Naive thymus-derived CD4-positive, alpha-beta T cell (primary cell): ENCODE measurements at regions of chr11 and their contacts with region 1.

Region 1: GRCh38 chr11:304915-305843 is 2.4 kb upstream of the IFITM2 start:
- DNase-seq: peak in 6 of 9 donors; percentile 62 to 76 (median 70)
- ATAC-seq: peak; percentile 44
- H3K4me3 ChIP-seq: no peak overlapping the region
- H3K4me3 Mint-ChIP-seq: peak overlapping the region in 7 of 10 donors; percentile 0 to 55 (median 47)
- H3K27ac ChIP-seq: peak overlapping the region; percentile 95
- H3K27ac Mint-ChIP-seq: peak overlapping the region; percentile 14 to 97 (median 84)
- H3K4me1 ChIP-seq: peaks cover 21 to 24% of the 10 kb centered on the region in 2 donors
- H3K4me1 Mint-ChIP-seq: peaks cover 29 to 61% (median 48%) of the 10 kb centered on the region in 7 donors
- H3K27me3 ChIP-seq: no peaks in the 10 kb centered on the region
- H3K27me3 Mint-ChIP-seq: peaks cover 0 to 9% (median 0%) of the 10 kb centered on the region in 5 donors

Region 2: DNA sequence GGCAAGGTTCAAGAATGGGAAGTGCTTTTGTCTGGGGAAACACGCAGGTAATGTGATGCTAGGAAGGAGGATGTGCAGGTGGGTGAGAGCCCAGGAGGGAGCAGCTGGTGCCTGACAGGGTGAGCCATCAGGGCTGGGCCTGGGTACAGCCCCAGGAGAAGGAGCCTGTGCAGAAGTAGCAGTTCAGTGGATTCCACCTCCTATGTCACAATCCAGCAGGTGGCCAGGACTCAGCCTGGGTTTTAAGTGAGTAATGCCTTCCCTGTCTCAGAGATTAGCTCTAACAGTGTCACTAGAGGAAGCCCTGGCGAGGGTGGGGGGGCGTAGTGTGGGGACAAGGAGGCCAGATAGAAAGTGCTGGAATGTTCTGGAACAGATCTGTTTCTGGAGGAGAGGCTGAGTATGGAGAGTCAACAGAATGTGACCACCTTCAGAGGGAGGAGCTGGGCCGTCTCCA is 89.6 kb before region 1 on chr11:
- CTCF ChIA-PET with region 1: no interaction called
- POLR2A ChIA-PET with region 1: no interaction called
- intact Hi-C with region 1: no loop called
- DNase-seq: peak in 1 of 9 donors; percentile 4
- ATAC-seq: no peak
- H3K4me3 ChIP-seq: no peak overlapping the region
- H3K4me3 Mint-ChIP-seq: no peak overlapping the region
- H3K27ac ChIP-seq: no peak overlapping the region
- H3K27ac Mint-ChIP-seq: peak overlapping the region in 5 of 9 donors; percentile 10 to 79 (median 60)
- H3K4me1 ChIP-seq: peaks cover 0 to 3% of the 10 kb centered on the region in 2 donors
- H3K4me1 Mint-ChIP-seq: peaks cover 0 to 25% (median 6%) of the 10 kb centered on the region in 7 donors
- H3K27me3 ChIP-seq: no peaks in the 10 kb centered on the region
- H3K27me3 Mint-ChIP-seq: no peaks in the 10 kb centered on the region

Region 3: DNA sequence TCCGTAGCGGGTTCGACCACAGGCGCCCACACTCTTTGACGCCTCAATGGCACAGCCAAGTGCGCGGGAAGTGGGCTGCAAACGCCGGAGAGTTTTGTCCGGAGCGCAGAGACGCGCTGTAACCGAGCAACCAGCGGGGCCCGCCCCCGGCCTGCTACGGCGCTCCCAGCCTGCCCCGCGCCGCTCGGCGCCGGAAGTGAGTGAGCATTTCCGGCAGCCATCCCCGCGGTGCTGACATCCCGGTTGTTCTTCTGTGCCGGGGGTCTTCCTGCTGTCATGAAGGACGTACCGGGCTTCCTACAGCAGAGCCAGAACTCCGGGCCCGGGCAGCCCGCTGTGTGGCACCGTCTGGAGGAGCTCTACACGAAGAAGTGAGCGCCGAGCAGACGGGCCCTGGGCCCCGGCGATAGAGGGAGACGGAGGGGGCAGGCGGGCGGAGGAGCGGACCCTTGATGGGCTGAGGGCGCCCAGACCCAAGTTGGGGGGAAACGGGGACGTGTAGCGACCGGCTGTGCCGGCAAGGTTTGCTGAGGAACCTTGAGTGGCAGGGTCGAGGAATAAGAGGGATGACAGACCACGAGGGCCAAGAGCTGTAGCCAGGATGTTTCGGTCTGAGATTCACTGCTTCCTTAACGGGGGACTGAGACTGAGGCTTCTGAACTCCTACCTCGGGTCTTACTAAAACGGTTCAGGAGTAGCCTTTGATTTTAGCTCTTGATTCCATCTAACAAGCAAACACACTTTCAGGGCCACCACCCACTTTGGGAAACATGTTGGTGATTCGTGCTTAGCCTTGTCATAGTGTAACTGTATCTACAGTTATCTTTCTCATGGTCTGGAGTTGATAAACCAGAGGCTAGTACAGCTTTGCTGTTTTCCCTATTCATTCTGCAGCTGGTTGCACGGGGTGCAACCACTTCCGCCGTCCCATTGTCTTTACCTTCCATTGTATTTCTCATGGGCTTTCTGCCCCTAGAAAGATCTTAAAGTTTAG is 68.1 kb before region 1 on chr11 and contains the start of gene PSMD13:
- CTCF ChIA-PET with region 1: interaction called, 3 read pairs
- POLR2A ChIA-PET with region 1: interaction called, 3 read pairs
- intact Hi-C with region 1: loop called in 1 of 2 experiments (anchors 2 kb)
- DNase-seq: peak; percentile 82 to 92 (median 88)
- ATAC-seq: peak; percentile 88
- H3K4me3 ChIP-seq: peak within 1 kb of the TSS; percentile 100
- H3K4me3 Mint-ChIP-seq: peak within 1 kb of the TSS; percentile 84 to 99 (median 96)
- H3K27ac ChIP-seq: peak within 1 kb of the TSS; percentile 97
- H3K27ac Mint-ChIP-seq: peak within 1 kb of the TSS; percentile 84 to 100 (median 100)
- H3K4me1 ChIP-seq: peaks cover 17 to 23% of the 10 kb centered on the region in 2 donors
- H3K4me1 Mint-ChIP-seq: peaks cover 26 to 66% (median 53%) of the 10 kb centered on the region in 7 donors
- H3K27me3 ChIP-seq: no peaks in the 10 kb centered on the region
- H3K27me3 Mint-ChIP-seq: no peaks in the 10 kb centered on the region
- total RNA-seq, gene PSMD13: 64.3 to 172 (median 86.9) TPM

Region 4: GRCh38 chr11:259413-259812 is 45.8 kb before region 1 on chr11:
- CTCF ChIA-PET with region 1: no interaction called
- POLR2A ChIA-PET with region 1: no interaction called
- intact Hi-C with region 1: no loop called
- DNase-seq: no peak
- ATAC-seq: no peak
- H3K4me3 ChIP-seq: no peak overlapping the region
- H3K4me3 Mint-ChIP-seq: no peak overlapping the region
- H3K27ac ChIP-seq: no peak overlapping the region
- H3K27ac Mint-ChIP-seq: no peak overlapping the region
- H3K4me1 ChIP-seq: no peaks in the 10 kb centered on the region
- H3K4me1 Mint-ChIP-seq: peaks cover 0 to 12% (median 0%) of the 10 kb centered on the region in 7 donors
- H3K27me3 ChIP-seq: no peaks in the 10 kb centered on the region
- H3K27me3 Mint-ChIP-seq: peaks cover 0 to 8% (median 0%) of the 10 kb centered on the region in 5 donors

Region 5: DNA sequence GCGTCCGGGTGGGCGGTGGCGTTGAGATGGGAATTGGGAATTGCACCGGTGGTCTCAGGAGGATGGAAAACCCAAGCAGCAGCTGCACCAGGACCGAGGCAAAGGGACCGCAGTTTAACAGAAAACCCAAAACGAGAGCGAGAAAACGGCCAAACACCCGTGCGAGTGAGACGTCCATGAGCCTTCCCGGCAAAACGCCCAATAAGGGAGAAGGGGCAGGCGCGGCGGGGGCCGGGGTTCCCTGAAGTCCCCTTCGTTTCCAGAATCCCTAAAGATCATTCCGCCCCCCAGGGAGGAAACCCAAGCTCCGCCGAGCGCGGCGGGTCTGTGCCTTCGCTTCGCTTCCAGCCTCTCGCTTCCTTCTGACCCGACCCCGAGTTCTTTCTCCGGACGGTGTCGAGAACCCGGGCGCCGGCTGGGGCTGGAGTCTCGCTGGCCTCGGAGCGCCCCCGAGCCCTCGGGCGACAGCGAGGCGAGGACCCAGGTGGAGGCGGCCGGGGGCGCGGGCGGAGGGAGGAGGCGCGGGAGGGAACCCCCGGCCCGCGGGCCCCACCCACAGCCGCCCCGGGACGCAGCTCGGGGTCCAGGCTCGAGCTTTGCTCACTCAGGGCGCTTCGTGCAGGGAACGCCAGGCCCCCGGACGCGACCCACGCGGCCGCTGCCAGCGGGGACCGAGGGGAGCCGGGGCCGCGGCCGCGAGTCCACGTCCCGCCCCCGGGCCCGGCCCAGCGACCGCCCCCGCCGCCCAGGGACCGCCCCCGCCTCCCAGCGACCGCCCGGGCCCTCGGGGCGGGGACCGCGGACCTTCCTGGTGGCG is 16.6 kb before region 1 on chr11 and contains the start of gene PGGHG:
- CTCF ChIA-PET with region 1: interaction called, 4 read pairs
- POLR2A ChIA-PET with region 1: interaction called, 23 read pairs
- intact Hi-C with region 1: no loop called
- DNase-seq: peak in 5 of 9 donors; percentile 40 to 72 (median 49)
- ATAC-seq: peak; percentile 65
- H3K4me3 ChIP-seq: peak within 1 kb of the TSS; percentile 64
- H3K4me3 Mint-ChIP-seq: peak within 1 kb of the TSS; percentile 88 to 100 (median 98)
- H3K27ac ChIP-seq: peak within 1 kb of the TSS; percentile 100
- H3K27ac Mint-ChIP-seq: peak within 1 kb of the TSS; percentile 89 to 100 (median 98)
- H3K4me1 ChIP-seq: peaks cover 16% of the 10 kb centered on the region in 2 donors
- H3K4me1 Mint-ChIP-seq: peaks cover 22 to 52% (median 38%) of the 10 kb centered on the region in 7 donors
- H3K27me3 ChIP-seq: no peaks in the 10 kb centered on the region
- H3K27me3 Mint-ChIP-seq: peaks cover 0 to 14% (median 0%) of the 10 kb centered on the region in 5 donors
- total RNA-seq, gene PGGHG: 325 to 656 (median 348) TPM

Region 6: DNA sequence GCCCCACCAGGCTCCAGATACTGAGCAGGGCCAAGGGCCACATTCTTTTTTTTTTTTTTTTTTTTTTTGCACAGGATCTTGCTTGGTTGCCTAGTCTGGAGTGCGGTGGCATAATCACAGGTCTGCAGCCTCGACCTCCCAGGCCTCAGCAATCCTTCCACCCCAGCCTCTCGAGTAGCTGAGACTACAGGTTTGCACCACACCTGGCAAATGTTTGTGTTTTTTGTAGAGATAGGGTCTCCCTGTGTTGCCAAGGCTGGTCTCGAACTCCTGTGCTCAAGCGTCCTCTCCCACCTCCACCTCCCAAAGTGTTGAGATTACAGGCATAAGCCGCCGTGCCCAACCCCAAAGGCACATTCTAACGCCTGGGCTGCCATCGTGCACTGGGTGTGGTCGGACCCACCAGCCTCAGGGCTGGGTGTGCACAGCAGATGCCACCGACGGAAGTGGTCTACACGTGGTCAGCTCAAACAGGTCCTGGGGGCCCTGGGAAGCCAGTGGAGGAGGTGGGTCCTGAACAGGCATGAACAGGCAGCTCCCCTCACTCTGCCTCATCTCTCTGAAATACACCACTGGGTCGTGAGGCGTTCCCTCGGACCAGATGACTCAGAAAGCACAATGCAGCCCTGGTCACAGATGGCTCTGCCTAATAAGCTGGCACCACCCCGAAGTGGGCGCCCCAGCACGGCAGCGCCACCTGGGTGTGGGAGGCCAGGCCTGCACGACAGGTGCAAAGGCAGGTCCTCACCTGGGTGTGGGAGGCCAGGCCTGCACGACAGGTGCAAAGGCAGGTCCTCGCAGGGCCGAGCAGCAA is 59.0 kb after region 1 on chr11:
- CTCF ChIA-PET with region 1: interaction called, 19 read pairs
- POLR2A ChIA-PET with region 1: interaction called, 4 read pairs
- intact Hi-C with region 1: loop called in 1 of 2 experiments (anchors 1 kb)
- DNase-seq: peak in 8 of 9 donors; percentile 47 to 63 (median 54)
- ATAC-seq: peak; percentile 84
- H3K4me3 ChIP-seq: no peak overlapping the region
- H3K4me3 Mint-ChIP-seq: no peak overlapping the region
- H3K27ac ChIP-seq: no peak overlapping the region
- H3K27ac Mint-ChIP-seq: no peak overlapping the region
- H3K4me1 ChIP-seq: peaks cover 10 to 14% of the 10 kb centered on the region in 2 donors
- H3K4me1 Mint-ChIP-seq: peaks cover 0 to 27% (median 17%) of the 10 kb centered on the region in 7 donors
- H3K27me3 ChIP-seq: peaks cover 3 to 7% of the 10 kb centered on the region in 2 donors
- H3K27me3 Mint-ChIP-seq: peaks cover 10 to 33% (median 23%) of the 10 kb centered on the region in 5 donors

Region 7: DNA sequence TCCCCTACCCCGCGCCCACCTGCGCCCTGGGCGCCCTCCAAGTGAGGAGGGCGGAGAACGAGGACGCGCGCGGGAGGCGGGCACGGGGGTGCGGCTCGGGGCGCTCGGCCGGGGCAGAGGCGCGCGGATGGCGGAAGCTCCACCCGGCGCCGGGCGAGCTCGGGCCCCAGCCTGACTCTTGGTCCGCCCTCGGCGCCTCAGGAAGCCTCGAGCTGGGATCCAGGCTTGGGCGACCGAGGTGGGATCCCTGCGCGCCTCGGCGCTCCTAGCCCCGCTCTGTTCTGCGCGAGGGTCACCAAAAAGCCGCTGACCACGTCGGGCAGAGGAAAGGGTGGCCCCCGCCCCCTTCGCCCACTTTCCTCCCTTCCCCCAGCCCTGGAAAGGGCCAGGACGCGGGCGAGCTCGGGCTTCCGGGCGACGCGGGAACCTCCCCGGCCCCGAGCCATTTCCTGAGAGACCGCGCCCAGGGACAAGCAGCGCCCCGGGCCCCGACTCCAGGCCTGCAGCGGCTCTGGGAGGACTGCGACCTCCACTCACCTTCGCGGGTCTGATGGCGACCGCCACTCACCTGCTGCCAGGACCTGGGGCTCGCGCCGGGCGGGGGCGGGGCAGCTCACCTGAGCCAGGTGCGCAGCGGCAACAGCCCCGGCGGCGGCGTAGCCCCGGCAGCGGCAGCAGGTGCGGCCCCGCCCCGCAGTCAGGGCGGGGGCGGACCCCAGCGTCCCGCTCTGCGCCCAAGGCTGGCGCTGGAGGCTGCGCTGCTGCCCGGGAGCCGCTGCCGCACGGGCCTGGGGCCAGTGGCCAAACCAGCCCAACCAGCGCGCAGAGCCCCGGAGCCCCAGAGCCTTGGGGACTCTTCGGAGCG is 111.8 kb after region 1 on chr11:
- CTCF ChIA-PET with region 1: no interaction called
- POLR2A ChIA-PET with region 1: interaction called, 4 read pairs
- intact Hi-C with region 1: loop called (anchors 5 kb)
- DNase-seq: peak; percentile 34 to 71 (median 47)
- ATAC-seq: peak; percentile 38
- H3K4me3 ChIP-seq: peak overlapping the region; percentile 92
- H3K4me3 Mint-ChIP-seq: peak overlapping the region; percentile 48 to 100 (median 96)
- H3K27ac ChIP-seq: peak overlapping the region; percentile 75
- H3K27ac Mint-ChIP-seq: peak overlapping the region in 4 of 9 donors; percentile 68 to 78 (median 70)
- H3K4me1 ChIP-seq: peaks cover 11 to 21% of the 10 kb centered on the region in 2 donors
- H3K4me1 Mint-ChIP-seq: peaks cover 10 to 37% (median 17%) of the 10 kb centered on the region in 7 donors
- H3K27me3 ChIP-seq: no peaks in the 10 kb centered on the region
- H3K27me3 Mint-ChIP-seq: no peaks in the 10 kb centered on the region

Region 8: GRCh38 chr11:554824-555472 is 249.8 kb after region 1 on chr11:
- CTCF ChIA-PET with region 1: no interaction called
- POLR2A ChIA-PET with region 1: no interaction called
- intact Hi-C with region 1: no loop called
- DNase-seq: peak; percentile 60 to 80 (median 72)
- ATAC-seq: peak; percentile 89
- H3K4me3 ChIP-seq: peak overlapping the region; percentile 46
- H3K4me3 Mint-ChIP-seq: peak overlapping the region in 7 of 10 donors; percentile 36 to 69 (median 57)
- H3K27ac ChIP-seq: peak overlapping the region; percentile 44
- H3K27ac Mint-ChIP-seq: no peak overlapping the region
- H3K4me1 ChIP-seq: peaks cover 9 to 16% of the 10 kb centered on the region in 2 donors
- H3K4me1 Mint-ChIP-seq: peaks cover 3 to 8% (median 7%) of the 10 kb centered on the region in 7 donors
- H3K27me3 ChIP-seq: no peaks in the 10 kb centered on the region
- H3K27me3 Mint-ChIP-seq: peaks cover 0 to 18% (median 0%) of the 10 kb centered on the region in 5 donors